PC-9 (cell line): ENCODE measurements at regions of chr3 and their contacts with region 1.

Region 1: DNA sequence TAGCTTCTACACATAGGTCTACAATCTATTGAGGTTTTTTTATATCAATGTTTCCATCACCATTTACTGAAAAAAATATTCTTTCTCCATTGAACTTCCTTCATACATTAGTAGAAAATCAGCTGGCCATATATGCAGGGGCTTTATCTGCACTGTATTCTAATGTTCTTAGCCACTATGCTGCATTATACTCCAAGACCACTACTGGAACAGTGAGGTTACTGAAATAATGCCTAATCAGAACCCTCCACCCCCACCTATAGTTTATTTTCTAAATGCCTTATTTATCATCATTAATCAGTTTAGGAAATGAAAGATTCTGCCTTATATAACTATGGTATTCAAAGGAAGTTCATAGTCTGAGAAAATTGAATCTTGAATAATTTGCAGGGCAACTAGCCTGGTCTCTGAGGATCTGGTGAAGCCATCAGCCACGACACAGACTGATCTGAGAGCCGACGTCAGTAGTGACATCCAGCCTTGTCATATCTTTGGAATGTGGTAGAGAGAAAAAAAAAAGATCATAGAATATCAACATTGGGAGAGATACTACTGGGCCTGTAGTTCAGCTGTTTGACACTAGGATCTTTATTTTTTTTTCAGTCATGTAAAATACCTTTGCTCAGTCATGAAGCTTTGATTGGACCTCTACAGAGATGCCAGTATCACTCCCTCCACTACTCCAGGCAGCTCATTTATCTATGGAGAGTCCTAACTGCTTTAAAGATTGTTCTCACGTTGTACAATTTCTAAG is 66.6 kb downstream of the P3H2 start:
- DNase-seq: peak; percentile 44 to 78
- H3K4me3 ChIP-seq: no peak overlapping the region
- H3K27ac ChIP-seq: no peak overlapping the region
- H3K4me1 ChIP-seq: peaks cover 8% of the 10 kb centered on the region; the same call in 1 of the 2 replicates
- H3K27me3 ChIP-seq: no peaks in the 10 kb centered on the region
- CTCF ChIP-seq: peak; percentile 51

Region 2: DNA sequence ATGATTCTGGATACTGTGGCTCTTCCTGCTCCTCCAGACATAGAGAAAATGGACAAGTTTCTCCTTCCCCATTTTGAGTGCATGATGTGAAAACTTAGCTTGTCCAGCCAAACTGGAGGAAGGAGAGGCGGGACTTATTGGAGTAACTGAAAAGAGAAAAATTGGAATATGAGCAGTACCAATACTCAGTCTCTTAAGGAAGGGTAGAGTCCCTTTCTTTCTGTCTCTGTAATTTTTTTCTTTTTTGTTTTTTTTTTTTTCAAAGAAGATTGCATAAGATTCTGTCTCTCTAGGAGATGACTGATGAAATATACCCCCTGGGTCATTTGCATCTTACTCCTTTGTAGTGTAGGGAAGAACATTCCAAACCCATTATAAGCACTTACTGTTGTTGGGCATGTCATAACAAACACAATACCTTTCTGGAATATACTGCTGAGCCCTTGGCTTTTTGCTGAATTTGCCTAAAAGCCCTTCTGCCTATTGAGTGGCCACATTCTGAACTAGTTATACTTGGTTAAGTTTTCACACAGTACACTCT is 1380.4 kb before region 1 on chr3:
- CTCF ChIA-PET with region 1: no interaction called
- POLR2A ChIA-PET with region 1: no interaction called
- intact Hi-C with region 1: no loop called
- DNase-seq: peak; percentile 24 to 93
- H3K4me3 ChIP-seq: no peak overlapping the region
- H3K27ac ChIP-seq: peak overlapping the region; percentile 62
- H3K4me1 ChIP-seq: peaks cover 17% of the 10 kb centered on the region
- H3K27me3 ChIP-seq: no peaks in the 10 kb centered on the region
- CTCF ChIP-seq: no peak

Region 3: DNA sequence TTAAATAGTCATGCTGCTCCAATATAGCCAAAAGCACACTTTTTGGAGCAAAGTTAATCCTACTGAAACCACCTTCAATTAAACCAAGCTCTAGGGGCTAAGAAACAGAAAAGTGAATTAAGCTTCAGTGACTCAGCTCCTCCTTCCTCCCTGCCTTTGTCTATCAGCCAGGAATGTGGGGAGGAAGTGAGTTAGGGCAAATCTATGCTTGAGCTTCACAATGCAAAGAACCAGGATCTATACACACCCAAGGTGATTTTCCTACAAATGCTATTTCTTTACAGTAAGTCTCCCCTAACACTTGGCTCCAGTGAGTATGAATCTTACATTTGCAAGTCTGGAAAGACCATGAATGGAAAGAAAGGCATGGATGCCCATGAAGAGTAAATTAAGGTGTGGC is 145.4 kb before region 1 on chr3:
- CTCF ChIA-PET with region 1: interaction called, 11 read pairs
- POLR2A ChIA-PET with region 1: no interaction called
- intact Hi-C with region 1: no loop called
- DNase-seq: peak; percentile 47 to 77
- H3K4me3 ChIP-seq: peak overlapping the region; percentile 7; the same call in 1 of the 2 replicates
- H3K27ac ChIP-seq: peak overlapping the region; percentile 98
- H3K4me1 ChIP-seq: peaks cover 45% of the 10 kb centered on the region
- H3K27me3 ChIP-seq: no peaks in the 10 kb centered on the region
- CTCF ChIP-seq: no peak

Region 4: GRCh38 chr3:190064112-190064511 is 10.0 kb after region 1 on chr3:
- CTCF ChIA-PET with region 1: interaction called, 4 read pairs
- POLR2A ChIA-PET with region 1: interaction called, 12 read pairs
- intact Hi-C with region 1: no loop called
- DNase-seq: peak; percentile 29 to 67
- H3K4me3 ChIP-seq: no peak overlapping the region
- H3K27ac ChIP-seq: no peak overlapping the region
- H3K4me1 ChIP-seq: peaks cover 7% of the 10 kb centered on the region; the same call in 1 of the 2 replicates
- H3K27me3 ChIP-seq: no peaks in the 10 kb centered on the region
- CTCF ChIP-seq: no peak